ENCODE measurements at regions of chr1 and their contacts with region 1.

Region 1: DNA sequence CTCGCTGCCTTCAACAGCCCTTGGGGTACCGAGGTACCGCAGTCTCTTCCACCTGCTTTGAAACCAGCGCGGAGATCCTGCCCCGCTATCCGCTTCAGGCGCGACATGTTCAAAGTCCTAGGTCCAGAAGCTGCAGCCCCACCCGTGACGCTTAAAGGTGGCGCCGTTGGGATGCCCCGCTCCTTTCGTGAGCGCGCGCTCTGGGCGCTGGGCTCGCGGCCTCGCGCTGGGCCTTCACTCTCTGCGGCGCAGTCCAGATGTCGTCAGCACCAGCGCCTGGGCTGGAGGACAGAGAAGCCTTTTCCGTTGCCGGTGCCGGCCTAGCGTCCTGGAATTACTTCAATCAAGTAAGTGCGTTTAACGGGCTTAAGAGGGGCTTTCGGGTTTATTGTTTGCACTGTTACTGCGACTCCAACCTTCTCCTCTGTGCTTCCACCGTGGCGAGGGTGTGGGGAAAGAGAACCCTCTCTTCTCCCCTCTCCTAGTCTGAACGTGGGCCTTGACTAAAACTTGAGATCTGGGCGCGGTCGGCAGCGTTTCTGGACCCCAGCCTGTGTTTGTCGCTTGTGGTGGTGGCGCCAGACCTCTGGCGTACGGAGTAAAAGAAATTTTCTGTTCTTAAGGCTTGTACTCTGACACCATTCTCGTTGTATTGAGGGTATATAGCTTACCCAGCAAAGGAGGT is at the start of gene LRRC40:
- DNase-seq: peak; percentile 97
- H3K4me3 Mint-ChIP-seq: peak within 1 kb of the TSS; percentile 97
- H3K27ac Mint-ChIP-seq: peak within 1 kb of the TSS; percentile 99
- H3K4me1 Mint-ChIP-seq: peaks cover 70% of the 10 kb centered on the region
- H3K27me3 Mint-ChIP-seq: no peaks in the 10 kb centered on the region
- total RNA-seq, gene LRRC40: 19.1 to 20.0 TPM

Region 2: GRCh38 chr1:69871412-69871811 is 334.2 kb before region 1 on chr1:
- CTCF ChIA-PET with region 1: no interaction called
- POLR2A ChIA-PET with region 1: no interaction called
- DNase-seq: no peak
- H3K4me3 Mint-ChIP-seq: no peak overlapping the region
- H3K27ac Mint-ChIP-seq: no peak overlapping the region
- H3K4me1 Mint-ChIP-seq: no peaks in the 10 kb centered on the region
- H3K27me3 Mint-ChIP-seq: no peaks in the 10 kb centered on the region

Region 3: DNA sequence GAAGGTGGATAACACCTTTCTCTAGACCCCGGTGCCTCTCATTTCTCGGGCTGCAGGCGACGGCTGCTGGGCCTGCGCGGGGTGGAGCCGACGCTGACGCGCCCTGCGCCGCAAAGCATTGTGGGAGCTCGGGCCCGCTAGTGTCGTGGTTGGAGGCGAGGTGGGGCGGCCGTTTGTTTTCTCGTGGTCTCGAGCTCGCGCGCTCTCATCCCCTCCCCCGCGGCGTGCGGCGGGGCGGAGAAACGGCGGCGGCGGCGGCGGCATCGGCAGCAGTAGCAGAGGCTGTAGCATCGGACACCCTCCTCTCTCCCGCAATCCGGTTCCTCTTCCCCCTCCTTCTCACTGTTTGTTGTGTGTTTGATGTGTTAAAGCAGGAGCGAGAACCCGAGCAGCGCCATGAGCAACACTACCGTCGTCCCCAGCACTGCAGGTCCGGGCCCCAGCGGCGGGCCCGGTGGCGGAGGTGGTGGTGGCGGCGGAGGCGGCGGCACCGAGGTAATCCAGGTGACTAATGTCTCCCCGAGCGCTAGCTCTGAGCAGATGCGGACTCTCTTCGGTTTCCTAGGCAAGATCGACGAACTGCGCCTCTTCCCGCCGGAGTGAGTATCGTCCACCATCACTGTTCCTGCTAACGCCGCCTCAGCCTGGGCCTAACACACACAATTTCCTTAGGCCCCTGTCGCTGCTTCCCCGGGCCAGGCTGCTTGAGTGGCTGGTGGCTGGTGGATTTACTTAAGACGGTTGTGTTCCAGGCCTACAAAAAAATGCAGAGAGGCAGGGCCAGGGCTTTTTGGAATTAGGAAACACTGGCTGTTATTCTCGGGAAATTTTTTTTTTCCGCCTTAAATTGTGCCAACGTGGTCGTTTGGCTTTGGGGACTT is 15.9 kb after region 1 on chr1 and contains the start of gene SRSF11:
- CTCF ChIA-PET with region 1: interaction called, 13 read pairs
- POLR2A ChIA-PET with region 1: interaction called, 123 read pairs
- DNase-seq: peak; percentile 96
- H3K4me3 Mint-ChIP-seq: peak within 1 kb of the TSS; percentile 86
- H3K27ac Mint-ChIP-seq: peak within 1 kb of the TSS; percentile 91
- H3K4me1 Mint-ChIP-seq: peaks cover 49% of the 10 kb centered on the region
- H3K27me3 Mint-ChIP-seq: no peaks in the 10 kb centered on the region
- total RNA-seq, gene SRSF11: 177 to 178 TPM

Region 4: DNA sequence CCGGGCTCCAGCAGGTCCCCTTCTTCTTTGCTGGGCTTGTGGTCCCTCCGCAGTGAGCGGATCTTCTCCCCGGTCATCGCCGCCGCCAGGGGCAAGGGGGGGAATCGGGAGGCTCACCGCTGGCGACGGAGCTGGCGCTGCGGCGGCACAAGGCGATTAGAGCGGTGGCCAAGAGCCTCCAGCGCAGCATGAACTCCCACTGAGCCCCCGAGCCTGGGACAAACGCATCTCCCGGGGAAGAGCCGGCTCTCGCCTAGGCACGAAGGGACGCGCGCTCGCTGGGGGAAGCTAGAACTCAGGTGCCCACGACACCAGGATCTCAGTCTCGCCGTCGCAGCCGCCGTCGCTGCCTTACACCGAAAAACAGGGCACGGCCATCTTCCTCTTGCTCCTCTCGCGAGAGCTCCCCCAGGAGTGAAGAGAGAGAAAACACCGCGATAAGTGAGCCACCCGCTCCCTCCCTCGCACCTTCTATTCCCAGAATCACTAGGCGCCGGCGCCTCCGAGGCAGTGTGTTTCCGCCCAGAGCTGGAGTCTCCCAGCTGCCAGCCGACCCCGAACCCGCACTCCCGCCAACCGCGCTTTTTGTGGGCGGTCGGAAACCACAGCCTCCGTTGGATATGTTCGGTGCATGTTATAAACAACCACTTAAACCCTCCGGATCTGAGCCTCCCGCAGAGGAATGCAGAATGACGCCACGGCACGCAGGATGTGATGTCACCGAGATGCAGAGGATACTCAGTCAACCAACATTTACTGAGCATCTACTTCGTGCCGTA is 148.9 kb after region 1 on chr1 and contains the start of gene ANKRD13C:
- CTCF ChIA-PET with region 1: no interaction called
- POLR2A ChIA-PET with region 1: interaction called, 27 read pairs
- DNase-seq: peak; percentile 94
- H3K4me3 Mint-ChIP-seq: peak within 1 kb of the TSS; percentile 83
- H3K27ac Mint-ChIP-seq: peak within 1 kb of the TSS; percentile 91
- H3K4me1 Mint-ChIP-seq: peaks cover 42% of the 10 kb centered on the region
- H3K27me3 Mint-ChIP-seq: no peaks in the 10 kb centered on the region
- total RNA-seq, gene ANKRD13C: 24.1 to 24.9 TPM

Region 5: GRCh38 chr1:71080739-71081696 is 875.4 kb after region 1 on chr1 and contains the start of gene ZRANB2:
- CTCF ChIA-PET with region 1: no interaction called
- POLR2A ChIA-PET with region 1: interaction called, 22 read pairs
- DNase-seq: peak; percentile 91
- H3K4me3 Mint-ChIP-seq: peak within 1 kb of the TSS; percentile 99
- H3K27ac Mint-ChIP-seq: peak within 1 kb of the TSS; percentile 99
- H3K4me1 Mint-ChIP-seq: peaks cover 33% of the 10 kb centered on the region
- H3K27me3 Mint-ChIP-seq: peaks cover 12% of the 10 kb centered on the region
- total RNA-seq, gene ZRANB2: 120 to 122 TPM